Left ventricle myocardium superior (tissue), 1 donor: ENCODE measurements at regions of chr6 and their contacts with region 1.

Region 1: DNA sequence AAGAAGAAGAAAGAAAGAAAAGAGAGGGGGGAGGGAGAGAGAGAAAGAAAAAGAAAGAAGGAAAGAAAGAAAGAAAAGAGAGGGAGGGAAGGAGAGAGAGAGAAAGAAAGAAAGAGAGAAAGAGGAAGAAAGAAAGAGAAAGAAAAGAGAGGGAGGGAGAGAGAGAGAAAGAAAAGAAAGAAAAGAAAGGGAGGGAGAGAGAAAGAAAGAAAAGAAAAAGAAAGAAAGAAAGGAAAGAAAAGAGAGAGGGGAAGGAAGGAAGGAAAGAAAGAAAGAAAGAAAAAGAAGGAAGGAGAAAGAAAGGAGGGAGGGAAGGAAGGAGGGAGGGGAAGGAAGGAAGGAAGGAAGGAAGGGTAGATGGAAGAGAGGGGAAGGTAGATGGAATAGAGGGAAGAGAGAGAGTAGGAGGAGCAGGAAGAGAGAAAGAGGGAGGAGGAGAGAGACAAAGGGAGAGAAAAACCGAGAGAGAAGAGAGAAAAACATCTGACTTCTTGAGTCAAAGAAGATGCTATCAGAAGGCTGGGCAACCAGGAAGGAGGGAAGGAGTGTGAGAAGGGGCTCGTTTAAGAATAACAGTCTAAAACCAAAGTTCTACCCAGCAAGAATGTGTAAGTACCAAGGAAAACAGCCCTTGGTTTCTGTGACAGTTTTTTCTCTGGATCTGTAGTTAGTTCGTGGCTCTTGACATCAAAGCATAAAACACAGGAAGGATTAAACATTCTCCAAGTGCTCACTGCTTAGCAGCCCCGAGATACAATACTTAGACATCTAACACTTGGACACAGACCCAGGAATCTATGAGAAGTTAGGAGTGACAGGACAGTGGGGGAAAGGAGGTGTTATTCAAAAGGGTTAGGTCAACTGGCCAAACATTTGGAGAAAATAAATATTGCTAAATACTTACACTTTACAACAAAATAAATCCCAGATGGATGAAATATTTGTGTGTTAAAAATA is 131.9 kb upstream of the STMND1 start:
- DNase-seq: no peak
- ATAC-seq: no peak

Region 2: GRCh38 chr6:16921399-16922110 is 48.4 kb before region 1 on chr6:
- intact Hi-C with region 1: loop called (anchors 2 kb)
- DNase-seq: no peak
- ATAC-seq: no peak